Heart right ventricle (tissue), 16 donors: ENCODE measurements at regions of chr20 and their contacts with region 1.

Region 1: GRCh38 chr20:25178563-25179438 is 16.7 kb upstream of the ENTPD6 start:
- DNase-seq: no peak
- ATAC-seq: peak; percentile 62 to 91 (median 78)
- H3K4me3 ChIP-seq: no peak overlapping the region
- H3K27ac ChIP-seq: no peak overlapping the region
- H3K4me1 ChIP-seq: peaks cover 0 to 9% (median 4%) of the 10 kb centered on the region in 9 donors
- H3K27me3 ChIP-seq: no peaks in the 10 kb centered on the region
- CTCF ChIP-seq: peak; percentile 59 to 80 (median 75)

Region 2: GRCh38 chr20:25065625-25066338 is 113.0 kb before region 1 on chr20:
- intact Hi-C with region 1: loop called in 6 of 10 experiments (anchors 2 to 10 kb)
- DNase-seq: peak; percentile 37 to 60
- ATAC-seq: peak; percentile 53 to 92 (median 79)
- H3K4me3 ChIP-seq: no peak overlapping the region
- H3K27ac ChIP-seq: peak overlapping the region in 1 of 10 donors; percentile 1
- H3K4me1 ChIP-seq: peaks cover 0 to 20% (median 11%) of the 10 kb centered on the region in 9 donors
- H3K27me3 ChIP-seq: peaks cover 0 to 36% (median 10%) of the 10 kb centered on the region in 7 donors
- CTCF ChIP-seq: peak; percentile 69 to 94 (median 81)

Region 3: GRCh38 chr20:25083773-25084625 is 94.8 kb before region 1 on chr20:
- intact Hi-C with region 1: loop called in 7 of 10 experiments (anchors 2 to 10 kb)
- DNase-seq: no peak
- ATAC-seq: peak in 4 of 8 donors; percentile 28 to 58 (median 48)
- H3K4me3 ChIP-seq: peak overlapping the region in 2 of 10 donors; percentile 5 to 18
- H3K27ac ChIP-seq: no peak overlapping the region
- H3K4me1 ChIP-seq: peaks cover 0 to 34% (median 23%) of the 10 kb centered on the region in 9 donors
- H3K27me3 ChIP-seq: peaks cover 37 to 99% (median 90%) of the 10 kb centered on the region in 7 donors
- CTCF ChIP-seq: peak in 5 of 9 donors; percentile 13 to 53 (median 48)

Region 4: GRCh38 chr20:25090492-25091429 is 88.0 kb before region 1 on chr20:
- intact Hi-C with region 1: loop called in 2 of 10 experiments (anchors 5 to 10 kb)
- DNase-seq: no peak
- ATAC-seq: peak in 2 of 8 donors; percentile 13 to 55
- H3K4me3 ChIP-seq: no peak overlapping the region
- H3K27ac ChIP-seq: no peak overlapping the region
- H3K4me1 ChIP-seq: no peaks in the 10 kb centered on the region
- H3K27me3 ChIP-seq: peaks cover under 1 to 56% (median 26%) of the 10 kb centered on the region in 7 donors
- CTCF ChIP-seq: no peak

Region 5: DNA sequence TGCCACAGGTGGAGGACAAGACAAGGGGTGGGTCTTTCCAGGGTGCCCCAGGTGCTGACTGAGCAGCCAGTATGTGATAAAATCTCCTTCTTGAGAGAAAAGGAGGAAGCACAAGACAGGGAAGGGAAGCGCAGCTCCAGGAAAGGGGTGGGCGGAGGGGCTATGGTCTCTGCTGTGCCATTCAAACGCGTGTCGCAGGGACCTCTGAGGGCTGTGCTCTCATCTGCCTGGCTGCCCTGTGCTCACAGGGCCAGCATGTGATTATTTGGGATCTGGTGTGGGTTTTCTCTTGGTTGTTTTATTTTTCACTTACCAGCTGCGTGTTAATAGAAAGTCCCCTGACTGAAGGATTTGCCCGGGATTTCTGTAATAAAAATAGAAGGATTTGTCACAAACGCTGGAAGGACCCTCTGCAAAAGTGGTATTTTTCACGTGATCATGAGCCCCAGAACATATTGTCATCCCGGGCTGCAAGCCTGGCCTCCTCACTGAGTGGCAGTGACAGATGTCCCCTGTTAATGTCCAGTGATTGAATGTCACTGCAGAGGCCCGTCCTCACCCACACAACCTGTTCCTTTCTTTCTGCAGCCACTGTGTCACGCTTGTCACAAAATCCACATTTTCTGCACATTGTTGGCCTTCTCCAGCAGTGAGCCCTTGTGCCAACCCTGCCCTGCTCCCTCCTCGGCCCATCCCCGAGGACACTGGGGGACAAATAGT is 61.9 kb before region 1 on chr20:
- intact Hi-C with region 1: loop called in 2 of 10 experiments (anchors 10 kb)
- DNase-seq: no peak
- ATAC-seq: peak in 2 of 8 donors; percentile 41 to 61
- H3K4me3 ChIP-seq: no peak overlapping the region
- H3K27ac ChIP-seq: no peak overlapping the region
- H3K4me1 ChIP-seq: peaks cover 0 to 12% (median 6%) of the 10 kb centered on the region in 9 donors
- H3K27me3 ChIP-seq: peaks cover 0 to 21% (median 6%) of the 10 kb centered on the region in 7 donors
- CTCF ChIP-seq: no peak

Region 6: DNA sequence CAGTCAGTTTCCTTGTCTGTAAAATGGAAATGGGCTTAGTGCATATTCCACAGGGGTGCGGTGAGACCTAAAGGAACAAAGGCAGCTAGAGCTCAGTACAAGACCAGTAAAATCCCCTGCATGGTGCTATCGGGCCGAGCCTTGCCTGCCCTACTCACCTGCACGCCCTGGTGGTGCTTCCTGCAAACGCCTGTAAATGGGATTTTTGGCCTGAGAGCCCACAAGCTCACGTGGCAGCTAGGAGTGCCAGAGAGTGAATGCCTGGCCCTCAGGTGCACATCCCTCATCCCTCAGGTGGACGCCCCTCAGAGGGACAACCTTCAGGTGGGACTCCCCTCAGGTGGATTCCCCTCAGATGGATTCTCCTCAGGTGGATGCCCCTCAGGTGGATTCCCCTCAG is 48.9 kb before region 1 on chr20:
- intact Hi-C with region 1: loop called in 1 of 10 experiments (anchors 10 kb)
- DNase-seq: no peak
- ATAC-seq: no peak
- H3K4me3 ChIP-seq: no peak overlapping the region
- H3K27ac ChIP-seq: no peak overlapping the region
- H3K4me1 ChIP-seq: no peaks in the 10 kb centered on the region
- H3K27me3 ChIP-seq: peaks cover 0 to 7% (median 0%) of the 10 kb centered on the region in 7 donors
- CTCF ChIP-seq: no peak